CD4-positive, alpha-beta T cell (primary cell): ENCODE measurements at regions of chr21 and their contacts with region 1.

Region 1: GRCh38 chr21:33380483-33380998 is 22.7 kb upstream of the IFNGR2 start:
- DNase-seq: peak; percentile 49 to 93 (median 80)
- ATAC-seq: peak; percentile 76
- H3K4me3 ChIP-seq: no peak overlapping the region
- H3K4me3 Mint-ChIP-seq: peak overlapping the region; percentile 81
- H3K27ac ChIP-seq: peak overlapping the region; percentile 22 to 74
- H3K27ac Mint-ChIP-seq: peak overlapping the region; percentile 95
- H3K4me1 ChIP-seq: peaks cover 63% of the 10 kb centered on the region
- H3K4me1 Mint-ChIP-seq: peaks cover 60% of the 10 kb centered on the region
- H3K27me3 ChIP-seq: no peaks in the 10 kb centered on the region
- H3K27me3 Mint-ChIP-seq: no peaks in the 10 kb centered on the region
- CTCF ChIP-seq: no peak

Region 2: GRCh38 chr21:33348706-33349105 is 31.8 kb before region 1 on chr21:
- CTCF ChIA-PET with region 1: no interaction called
- POLR2A ChIA-PET with region 1: interaction called, 3 read pairs
- intact Hi-C with region 1: loop called in 1 of 2 experiments (anchors 5 kb)
- DNase-seq: no peak
- ATAC-seq: no peak
- H3K4me3 ChIP-seq: no peak overlapping the region
- H3K4me3 Mint-ChIP-seq: no peak overlapping the region
- H3K27ac ChIP-seq: no peak overlapping the region
- H3K27ac Mint-ChIP-seq: peak overlapping the region; percentile 84
- H3K4me1 ChIP-seq: no peaks in the 10 kb centered on the region
- H3K4me1 Mint-ChIP-seq: peaks cover 23% of the 10 kb centered on the region
- H3K27me3 ChIP-seq: no peaks in the 10 kb centered on the region
- H3K27me3 Mint-ChIP-seq: no peaks in the 10 kb centered on the region
- CTCF ChIP-seq: no peak

Region 3: DNA sequence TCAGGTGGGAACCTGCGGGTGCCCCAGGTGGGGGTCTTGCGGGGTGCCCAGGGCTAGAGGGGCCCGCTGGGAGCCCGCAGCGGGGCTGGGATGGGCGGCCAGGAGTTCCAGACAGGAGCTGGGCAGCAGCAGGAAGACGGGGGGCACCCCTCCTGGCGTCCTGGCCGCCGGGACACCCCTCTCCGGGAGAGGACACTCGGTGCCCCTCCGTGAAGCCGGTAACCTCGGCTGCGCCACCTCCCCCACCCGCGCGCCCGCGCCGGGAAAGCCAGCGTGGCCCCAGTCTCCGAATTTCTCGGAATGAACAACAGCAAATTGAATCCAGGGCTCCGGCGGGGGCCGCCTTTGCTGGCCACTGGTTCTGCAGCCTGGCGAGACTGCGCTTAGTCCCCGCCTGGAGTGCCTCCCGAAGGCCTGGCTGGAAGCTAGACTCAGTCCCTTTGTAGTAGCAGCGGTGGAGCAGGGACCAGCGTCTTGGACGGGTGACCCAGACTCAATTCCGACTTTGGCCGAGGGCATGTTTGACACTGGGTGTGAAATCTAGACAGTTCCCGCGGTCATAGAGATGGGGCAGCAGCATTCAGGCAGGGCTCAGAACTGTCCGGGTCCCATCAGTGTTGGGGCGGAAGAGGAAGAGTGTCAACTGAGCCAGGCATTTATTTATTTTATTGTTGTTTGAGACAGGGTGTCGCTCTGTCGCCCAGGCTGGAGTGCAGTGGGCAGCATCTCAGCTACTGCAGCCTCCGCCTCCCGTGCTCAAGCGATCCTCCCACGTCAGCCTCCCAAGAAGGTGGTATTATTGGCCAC is 23.4 kb after region 1 on chr21:
- CTCF ChIA-PET with region 1: no interaction called
- POLR2A ChIA-PET with region 1: interaction called, 9 read pairs
- intact Hi-C with region 1: loop called (anchors 2 kb)
- DNase-seq: peak in 10 of 14 experiments; percentile 8 to 45 (median 32)
- ATAC-seq: peak; percentile 33
- H3K4me3 ChIP-seq: peak overlapping the region; percentile 82
- H3K4me3 Mint-ChIP-seq: peak overlapping the region; percentile 96
- H3K27ac ChIP-seq: peak overlapping the region in 1 of 2 donors; percentile 65
- H3K27ac Mint-ChIP-seq: peak overlapping the region; percentile 84
- H3K4me1 ChIP-seq: peaks cover 38% of the 10 kb centered on the region
- H3K4me1 Mint-ChIP-seq: peaks cover 47% of the 10 kb centered on the region
- H3K27me3 ChIP-seq: no peaks in the 10 kb centered on the region
- H3K27me3 Mint-ChIP-seq: no peaks in the 10 kb centered on the region
- CTCF ChIP-seq: no peak